ENCODE measurements at regions of chr18 and their contacts with region 1.

Region 1: DNA sequence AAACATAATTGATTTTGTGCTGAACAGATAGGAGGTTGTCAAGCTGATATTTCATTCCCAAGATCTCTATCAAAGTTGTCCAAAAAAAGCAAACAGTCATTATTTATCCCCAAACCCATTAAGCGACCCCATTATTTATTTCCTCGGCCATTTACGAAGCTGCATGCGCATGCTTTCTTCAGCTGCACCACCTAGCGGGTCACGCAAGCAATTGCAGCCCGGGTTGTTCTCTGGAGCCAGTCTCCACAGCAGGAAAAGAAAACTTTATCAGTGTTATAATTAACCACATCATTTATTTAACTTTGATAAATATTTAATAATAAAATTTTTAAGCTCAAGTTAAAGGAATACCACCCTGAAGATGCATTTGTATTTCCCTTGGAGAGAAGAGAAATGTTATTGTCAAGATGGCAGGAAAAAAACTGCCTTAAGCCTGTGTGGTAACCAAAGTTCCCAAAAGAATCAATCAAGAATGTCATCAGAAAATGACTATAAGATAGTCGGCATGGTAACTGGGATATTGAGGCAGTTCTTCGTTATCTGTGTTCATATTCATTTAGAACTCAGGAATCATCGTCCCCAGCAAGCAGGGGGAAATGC is 304.7 kb downstream of the FBXO15 start:
- DNase-seq: peak in 1 of 2 experiments; percentile 70
- H3K4me3 ChIP-seq: no peak overlapping the region
- H3K27ac ChIP-seq: no peak overlapping the region
- H3K4me1 ChIP-seq: peaks cover 0 to 3% (median 1%) of the 10 kb centered on the region in 4 experiments; a peak in 1 of 7 replicates
- H3K27me3 ChIP-seq: no peaks in the 10 kb centered on the region
- CTCF ChIP-seq: peak; percentile 70 to 83 (median 77)
- EP300 ChIP-seq: no peak
- POLR2A ChIP-seq: no peak
- RAD21 ChIP-seq: peak; percentile 80 to 89

Region 2: GRCh38 chr18:73852789-73853549 is 10.1 kb after region 1 on chr18:
- CTCF ChIA-PET with region 1: interaction called, 25 read pairs
- POLR2A ChIA-PET with region 1: no interaction called
- DNase-seq: no peak
- H3K4me3 ChIP-seq: no peak overlapping the region
- H3K27ac ChIP-seq: no peak overlapping the region
- H3K4me1 ChIP-seq: no peaks in the 10 kb centered on the region
- H3K27me3 ChIP-seq: no peaks in the 10 kb centered on the region
- CTCF ChIP-seq: no peak
- EP300 ChIP-seq: no peak
- POLR2A ChIP-seq: no peak
- RAD21 ChIP-seq: no peak

Region 3: GRCh38 chr18:73908323-73908722 is 65.4 kb after region 1 on chr18:
- CTCF ChIA-PET with region 1: no interaction called
- POLR2A ChIA-PET with region 1: no interaction called
- DNase-seq: peak in 1 of 2 experiments; percentile 59
- H3K4me3 ChIP-seq: no peak overlapping the region
- H3K27ac ChIP-seq: no peak overlapping the region
- H3K4me1 ChIP-seq: no peaks in the 10 kb centered on the region
- H3K27me3 ChIP-seq: no peaks in the 10 kb centered on the region
- CTCF ChIP-seq: no peak
- EP300 ChIP-seq: no peak
- POLR2A ChIP-seq: no peak
- RAD21 ChIP-seq: 0 out of 4 replicates have a peak, but pooled peaks of 1 of the 2 experiments have one; percentile 3

Region 4: DNA sequence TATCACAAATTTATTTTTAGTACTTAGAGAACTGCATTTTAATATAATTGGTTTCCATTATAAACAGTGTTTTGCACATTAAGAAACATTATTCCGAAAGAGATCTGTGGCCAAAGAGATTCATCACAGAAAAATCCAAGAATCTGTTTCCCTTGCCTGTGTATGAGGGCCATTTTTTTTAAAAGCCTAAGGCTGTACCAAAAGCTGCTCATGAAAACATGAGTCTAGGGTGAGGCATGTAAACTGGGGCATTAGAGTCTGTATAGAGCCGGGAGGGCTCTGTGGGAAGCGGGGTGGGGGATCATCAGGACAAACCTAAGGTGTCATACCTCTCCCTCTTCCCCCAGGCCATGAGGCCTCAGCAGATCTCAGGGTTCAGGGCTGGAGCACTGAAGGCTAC is 81.0 kb after region 1 on chr18:
- CTCF ChIA-PET with region 1: no interaction called
- POLR2A ChIA-PET with region 1: no interaction called
- DNase-seq: no peak
- H3K4me3 ChIP-seq: no peak overlapping the region
- H3K27ac ChIP-seq: no peak overlapping the region
- H3K4me1 ChIP-seq: no peaks in the 10 kb centered on the region
- H3K27me3 ChIP-seq: no peaks in the 10 kb centered on the region
- CTCF ChIP-seq: no peak
- EP300 ChIP-seq: no peak
- POLR2A ChIP-seq: no peak
- RAD21 ChIP-seq: no peak

Region 5: DNA sequence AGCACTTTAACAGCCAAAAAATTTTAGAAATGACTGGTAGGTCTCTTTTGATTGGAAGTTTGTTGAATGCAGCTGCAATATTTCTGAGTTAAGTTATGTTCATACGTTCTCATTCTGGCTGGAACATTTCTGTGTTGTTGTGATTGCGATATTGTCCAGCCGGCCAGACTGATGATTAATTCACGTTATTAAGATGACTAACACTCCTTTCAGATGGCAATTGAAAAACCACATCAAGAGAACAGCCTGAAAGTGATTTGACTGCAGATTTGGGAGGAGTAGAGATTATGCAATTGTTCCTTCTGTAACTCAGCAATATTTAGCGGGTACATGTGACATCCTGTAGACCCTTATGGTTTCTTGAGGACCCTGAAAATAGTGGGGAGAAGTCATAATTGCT is 171.1 kb after region 1 on chr18:
- CTCF ChIA-PET with region 1: no interaction called
- POLR2A ChIA-PET with region 1: no interaction called
- DNase-seq: no peak
- H3K4me3 ChIP-seq: no peak overlapping the region
- H3K27ac ChIP-seq: no peak overlapping the region
- H3K4me1 ChIP-seq: no peaks in the 10 kb centered on the region; a peak in 1 of 7 replicates
- H3K27me3 ChIP-seq: no peaks in the 10 kb centered on the region
- CTCF ChIP-seq: no peak
- EP300 ChIP-seq: no peak
- POLR2A ChIP-seq: no peak
- RAD21 ChIP-seq: no peak